HepG2 (cell line): ENCODE measurements at regions of chr11 and their contacts with region 1.

Region 1: DNA sequence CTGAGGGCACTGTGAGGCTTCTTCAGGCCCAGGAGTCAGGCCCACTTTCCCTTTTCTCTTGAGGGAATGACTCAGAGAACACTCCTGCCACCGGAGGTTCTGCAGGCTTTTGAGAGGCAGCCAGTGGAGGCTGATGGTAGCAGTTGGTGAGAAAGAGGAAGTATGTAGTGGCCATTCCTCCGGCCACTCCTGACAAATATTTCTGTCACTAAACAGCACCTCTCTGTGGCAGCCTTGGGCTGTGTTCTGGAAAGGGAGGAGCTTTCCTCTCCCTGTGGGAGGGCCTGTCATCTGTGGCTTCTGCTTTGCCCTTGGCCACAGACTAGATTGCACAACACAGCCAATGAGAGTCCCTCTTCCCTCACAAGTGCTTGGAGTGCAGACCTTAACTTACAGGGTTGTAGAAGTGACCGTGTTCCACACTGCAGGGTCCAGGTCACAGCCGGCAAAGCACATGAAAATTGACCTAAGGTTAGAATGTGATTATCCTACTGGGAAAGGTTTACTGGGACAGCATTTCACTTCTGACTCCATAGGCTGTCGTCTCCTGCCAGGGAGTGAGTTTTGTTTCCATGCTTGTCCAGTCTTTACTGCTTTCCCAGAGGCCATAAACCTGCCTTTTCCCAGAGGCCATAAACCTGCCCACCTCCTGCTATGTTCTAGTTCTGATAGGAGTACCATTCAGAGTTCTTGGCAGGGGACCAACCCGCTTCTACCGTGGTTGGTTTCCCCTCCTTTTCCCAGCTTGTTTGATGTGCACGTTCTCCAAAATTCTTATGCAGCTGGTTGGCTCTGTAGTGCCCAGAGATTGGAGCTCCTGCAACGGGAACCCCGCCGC is 33.3 kb downstream of the MARK2 start:
- DNase-seq: peak; percentile 96
- ATAC-seq: peak; percentile 99
- H3K4me3 ChIP-seq: peak overlapping the region in 1 of 3 experiments; percentile 35; a peak in 2 of 6 replicates
- H3K27ac ChIP-seq: peak overlapping the region; percentile 64
- H3K4me1 ChIP-seq: peaks cover 26% of the 10 kb centered on the region
- H3K27me3 ChIP-seq: no peaks in the 10 kb centered on the region
- CTCF ChIP-seq: peak; percentile 95
- EP300 ChIP-seq: peak in 1 of 2 experiments; percentile 38; a peak in 1 of 4 replicates
- POLR2A ChIP-seq: no peak
- RAD21 ChIP-seq: peak; percentile 91

Region 2: GRCh38 chr11:63855975-63856749 is 16.0 kb before region 1 on chr11:
- CTCF ChIA-PET with region 1: no interaction called
- POLR2A ChIA-PET with region 1: interaction called, 10 read pairs
- in situ Hi-C with region 1: no loop called
- intact Hi-C with region 1: no loop called
- DNase-seq: peak; percentile 68
- ATAC-seq: peak; percentile 74
- H3K4me3 ChIP-seq: no peak overlapping the region
- H3K27ac ChIP-seq: peak overlapping the region; percentile 65
- H3K4me1 ChIP-seq: peaks cover 55% of the 10 kb centered on the region
- H3K27me3 ChIP-seq: no peaks in the 10 kb centered on the region
- CTCF ChIP-seq: no peak
- EP300 ChIP-seq: peak in 1 of 2 experiments; percentile 37; a peak in 1 of 4 replicates
- POLR2A ChIP-seq: no peak
- RAD21 ChIP-seq: no peak

Region 3: DNA sequence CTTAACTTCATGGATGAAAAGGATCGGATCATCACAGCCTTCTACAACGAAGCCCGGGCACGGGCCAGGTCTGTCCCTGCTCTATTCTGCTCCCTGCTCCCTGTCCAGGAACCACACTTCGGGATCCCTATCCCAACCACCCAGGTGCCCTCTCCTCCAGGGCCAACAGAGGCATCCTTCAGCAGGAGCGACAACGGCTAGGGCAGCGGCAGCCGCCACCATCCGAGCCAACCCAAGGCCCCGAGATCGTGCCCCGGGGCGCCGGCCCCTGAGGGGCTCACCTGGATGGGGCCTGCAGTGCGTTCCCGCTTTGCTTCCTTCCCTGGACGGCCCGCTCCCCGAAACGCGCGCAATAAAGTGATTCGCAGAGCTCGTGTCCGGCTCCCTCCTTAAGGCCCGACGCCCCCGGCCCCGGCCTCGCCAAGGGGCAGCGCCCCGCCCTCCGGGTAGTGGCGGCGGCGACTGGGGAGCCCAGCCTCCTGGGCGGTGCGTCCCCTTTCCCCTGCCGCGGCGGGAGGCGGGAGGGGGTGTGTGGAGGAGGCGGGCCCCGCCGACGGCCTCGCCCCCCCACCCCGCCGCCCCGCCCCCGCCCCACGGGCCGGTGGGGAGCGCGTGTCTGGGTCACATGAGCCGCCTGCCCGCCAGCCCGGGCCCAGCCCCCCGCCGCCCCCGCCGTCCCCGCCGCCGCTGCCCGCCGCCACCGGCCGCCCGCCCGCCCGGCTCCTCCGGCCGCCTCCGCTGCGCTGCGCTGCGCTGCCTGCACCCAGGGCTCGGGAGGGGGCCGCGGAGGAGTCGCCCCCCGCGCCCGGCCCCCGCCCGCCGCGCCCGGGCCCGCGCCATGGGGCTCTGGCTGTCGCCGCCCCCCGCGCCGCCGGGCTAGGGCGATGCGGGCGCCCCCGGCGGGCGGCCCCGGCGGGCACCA is 362.0 kb after region 1 on chr11 and contains the start of gene VEGFB:
- CTCF ChIA-PET with region 1: no interaction called
- POLR2A ChIA-PET with region 1: no interaction called
- in situ Hi-C with region 1: no loop called
- intact Hi-C with region 1: no loop called
- DNase-seq: no peak
- ATAC-seq: peak; percentile 8; the same call in 2 of the 3 replicates
- H3K4me3 ChIP-seq: peak within 1 kb of the TSS; percentile 60 to 80 (median 76)
- H3K27ac ChIP-seq: peak within 1 kb of the TSS; percentile 43
- H3K4me1 ChIP-seq: peaks cover 73% of the 10 kb centered on the region
- H3K27me3 ChIP-seq: no peaks in the 10 kb centered on the region
- CTCF ChIP-seq: no peak
- EP300 ChIP-seq: no peak
- POLR2A ChIP-seq: no peak
- RAD21 ChIP-seq: no peak
- total RNA-seq, gene VEGFB: 10.1 and 11.3 TPM in 2 replicates